GM23248 (cell line): ENCODE measurements at regions of chr18 and their contacts with region 1.

Region 1: GRCh38 chr18:52288403-52289004 is 51.5 kb upstream of the DCC start:
- DNase-seq: peak; percentile 13
- H3K4me3 ChIP-seq: no peak overlapping the region
- H3K27ac ChIP-seq: no peak overlapping the region
- H3K4me1 ChIP-seq: no peaks in the 10 kb centered on the region
- H3K27me3 ChIP-seq: no peaks in the 10 kb centered on the region

Region 2: GRCh38 chr18:51668101-51668500 is 620.4 kb before region 1 on chr18:
- in situ Hi-C with region 1: loop called (anchors 25 kb)
- DNase-seq: peak; percentile 61
- H3K4me3 ChIP-seq: no peak overlapping the region
- H3K27ac ChIP-seq: no peak overlapping the region
- H3K4me1 ChIP-seq: no peaks in the 10 kb centered on the region
- H3K27me3 ChIP-seq: no peaks in the 10 kb centered on the region

Region 3: GRCh38 chr18:51751901-51752300 is 536.6 kb before region 1 on chr18:
- in situ Hi-C with region 1: no loop called
- DNase-seq: peak; percentile 2
- H3K4me3 ChIP-seq: no peak overlapping the region
- H3K27ac ChIP-seq: no peak overlapping the region
- H3K4me1 ChIP-seq: no peaks in the 10 kb centered on the region
- H3K27me3 ChIP-seq: no peaks in the 10 kb centered on the region

Region 4: GRCh38 chr18:52391810-52392559 is 103.5 kb after region 1 on chr18:
- in situ Hi-C with region 1: loop called (anchors 25 kb)
- DNase-seq: no peak
- H3K4me3 ChIP-seq: no peak overlapping the region
- H3K27ac ChIP-seq: no peak overlapping the region
- H3K4me1 ChIP-seq: no peaks in the 10 kb centered on the region
- H3K27me3 ChIP-seq: no peaks in the 10 kb centered on the region

Region 5: DNA sequence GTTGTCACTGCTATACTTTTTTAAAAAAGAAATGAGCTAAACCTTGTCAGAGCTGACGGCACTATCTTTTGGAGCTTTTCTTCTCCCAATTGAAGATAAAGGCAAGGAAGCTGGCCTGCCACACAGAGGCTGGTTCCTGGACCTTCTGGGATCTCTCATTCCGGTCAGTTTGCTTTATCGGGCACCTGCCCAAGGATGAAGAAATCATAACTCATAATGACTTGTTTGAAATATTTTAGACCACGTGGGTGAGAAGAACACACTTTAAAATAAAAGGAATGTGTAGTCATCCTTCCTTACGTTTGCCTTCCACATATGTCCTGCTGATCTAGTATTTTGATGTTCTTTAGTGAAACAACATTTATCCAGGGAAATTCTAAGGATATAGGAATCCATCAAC is 587.2 kb after region 1 on chr18:
- in situ Hi-C with region 1: no loop called
- DNase-seq: no peak
- H3K4me3 ChIP-seq: no peak overlapping the region
- H3K27ac ChIP-seq: no peak overlapping the region
- H3K4me1 ChIP-seq: no peaks in the 10 kb centered on the region
- H3K27me3 ChIP-seq: no peaks in the 10 kb centered on the region